SK-N-SH (cell line): ENCODE measurements at regions of chr14 and their contacts with region 1.

Region 1: GRCh38 chr14:59707778-59708561 is 131.4 kb upstream of the CCDC175 start:
- DNase-seq: peak; percentile 19
- H3K4me3 ChIP-seq: no peak overlapping the region
- H3K27ac ChIP-seq: no peak overlapping the region
- H3K4me1 ChIP-seq: no peaks in the 10 kb centered on the region
- H3K27me3 ChIP-seq: no peaks in the 10 kb centered on the region
- CTCF ChIP-seq: no peak; the same call in 1 of the 2 replicates
- EP300 ChIP-seq: no peak
- RAD21 ChIP-seq: peak; percentile 73

Region 2: DNA sequence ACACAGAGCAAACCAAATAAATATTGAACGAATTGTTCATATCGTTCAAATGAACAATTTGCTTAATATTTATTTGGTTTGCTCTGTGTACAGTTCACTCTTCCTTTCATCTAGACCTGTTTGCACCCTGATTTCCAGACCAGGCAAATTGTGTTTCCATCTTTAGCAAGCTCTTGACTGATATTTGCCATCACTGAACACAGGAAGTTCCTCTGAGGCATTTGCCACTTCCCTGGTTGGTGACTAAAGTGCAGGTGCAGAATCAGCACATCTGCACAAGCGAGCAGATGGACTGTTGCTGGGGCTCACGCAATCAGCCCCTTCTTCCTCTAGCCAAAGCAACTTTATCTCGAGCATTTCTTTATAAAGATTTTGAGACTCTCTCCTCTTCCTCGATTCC is 406.6 kb before region 1 on chr14:
- CTCF ChIA-PET with region 1: no interaction called
- POLR2A ChIA-PET with region 1: no interaction called
- DNase-seq: no peak
- H3K4me3 ChIP-seq: no peak overlapping the region
- H3K27ac ChIP-seq: no peak overlapping the region
- H3K4me1 ChIP-seq: peaks cover 5 to 13% of the 10 kb centered on the region in 2 experiments
- H3K27me3 ChIP-seq: no peaks in the 10 kb centered on the region
- CTCF ChIP-seq: no peak
- EP300 ChIP-seq: no peak
- RAD21 ChIP-seq: no peak

Region 3: DNA sequence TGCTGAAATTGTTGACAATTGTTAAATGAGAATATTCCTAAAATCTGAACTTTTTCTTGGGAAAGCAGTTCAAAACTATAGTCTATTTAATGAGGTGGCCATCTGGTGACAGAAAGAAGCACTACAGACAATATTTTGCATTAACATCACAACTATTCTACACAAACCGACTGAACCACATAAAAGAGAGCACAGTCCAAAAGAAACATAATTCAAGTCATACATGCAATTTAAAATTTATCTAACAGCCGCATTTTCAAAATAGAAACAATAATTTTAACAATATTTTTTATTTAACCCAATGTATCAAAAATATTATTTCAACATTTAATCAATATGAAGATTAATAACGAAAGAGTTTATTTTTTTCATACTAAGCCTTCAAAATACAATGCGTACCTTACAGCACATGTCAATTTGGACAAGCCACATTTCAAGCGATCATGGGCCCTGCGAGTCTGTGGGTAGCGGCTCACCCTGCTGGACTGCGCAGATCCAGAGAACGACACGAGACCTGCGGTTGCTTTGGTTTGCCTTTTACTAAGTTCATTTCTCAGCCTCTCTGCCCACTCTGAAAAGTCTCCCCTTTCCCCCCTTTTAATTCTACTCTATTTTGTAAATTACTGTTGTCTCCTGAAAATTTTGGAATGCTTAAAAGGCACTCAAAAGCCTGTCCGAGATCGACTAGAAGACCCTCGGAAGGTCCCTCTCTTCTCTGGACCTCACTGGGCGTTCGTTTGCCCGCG is 211.0 kb after region 1 on chr14:
- CTCF ChIA-PET with region 1: interaction called, 14 read pairs
- POLR2A ChIA-PET with region 1: no interaction called
- DNase-seq: peak; percentile 56
- H3K4me3 ChIP-seq: peak overlapping the region; percentile 49 to 59
- H3K27ac ChIP-seq: no peak overlapping the region
- H3K4me1 ChIP-seq: peaks cover 4% of the 10 kb centered on the region in 2 experiments; a peak in 2 of 4 replicates
- H3K27me3 ChIP-seq: no peaks in the 10 kb centered on the region
- CTCF ChIP-seq: peak; percentile 65
- EP300 ChIP-seq: no peak
- RAD21 ChIP-seq: peak; percentile 58